WTC11 (cell line): ENCODE measurements at regions of chr2 and their contacts with region 1.

Region 1: GRCh38 chr2:135876066-135876711 is at the start of gene MCM6:
- DNase-seq: peak; percentile 98
- ATAC-seq: peak; percentile 91
- H3K4me3 Mint-ChIP-seq: peak within 1 kb of the TSS; percentile 90
- H3K27ac Mint-ChIP-seq: peak within 1 kb of the TSS; percentile 94
- H3K4me1 Mint-ChIP-seq: peaks cover 29% of the 10 kb centered on the region
- H3K27me3 Mint-ChIP-seq: peaks cover 4% of the 10 kb centered on the region; the same call in 1 of the 2 replicates
- CTCF ChIP-seq: no peak
- total RNA-seq, gene MCM6: 87.0 to 107 TPM (median 88.1 TPM) in 3 replicates

Region 2: GRCh38 chr2:135831180-135831812 is 44.9 kb before region 1 on chr2:
- CTCF ChIA-PET with region 1: no interaction called
- POLR2A ChIA-PET with region 1: no interaction called
- DNase-seq: no peak
- ATAC-seq: no peak
- H3K4me3 Mint-ChIP-seq: no peak overlapping the region
- H3K27ac Mint-ChIP-seq: no peak overlapping the region
- H3K4me1 Mint-ChIP-seq: no peaks in the 10 kb centered on the region
- H3K27me3 Mint-ChIP-seq: no peaks in the 10 kb centered on the region; the same call in 1 of the 2 replicates
- CTCF ChIP-seq: no peak

Region 3: DNA sequence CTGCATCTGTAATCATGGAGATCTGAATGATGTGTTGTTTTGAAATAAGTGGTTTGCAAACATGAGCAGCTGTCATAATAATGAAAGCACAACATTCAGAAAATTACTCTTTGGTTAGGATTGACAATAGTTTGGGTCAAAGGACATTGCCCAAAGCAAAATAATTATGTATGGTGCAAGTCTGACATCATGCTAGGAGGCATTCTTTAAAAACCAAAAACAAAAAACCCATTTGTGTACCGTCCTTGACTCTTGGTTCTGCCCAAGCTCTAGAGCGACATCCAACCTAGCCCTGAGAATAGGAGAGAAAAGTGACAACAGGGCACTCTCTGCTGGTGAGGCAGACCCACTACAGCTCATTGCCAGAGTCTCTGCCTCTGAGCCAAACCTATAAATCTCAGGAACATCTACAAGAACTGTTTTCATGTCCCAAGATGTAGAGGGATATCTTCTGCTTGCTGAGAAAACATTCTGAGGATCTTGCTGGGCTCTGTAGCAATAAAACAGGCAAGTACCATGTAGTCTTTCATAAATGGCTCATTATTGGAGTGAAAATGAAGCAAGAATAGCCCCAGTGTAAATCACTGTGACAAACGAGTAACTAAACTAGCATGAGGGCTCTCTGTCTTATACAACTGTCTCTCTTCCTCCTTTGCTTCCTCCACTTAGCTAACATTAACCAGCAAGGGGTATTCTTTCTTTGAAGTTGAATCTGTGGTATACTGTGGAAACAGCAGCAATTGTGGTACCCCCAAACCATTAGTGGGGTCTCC is 508.5 kb after region 1 on chr2:
- CTCF ChIA-PET with region 1: interaction called, 11 read pairs
- POLR2A ChIA-PET with region 1: interaction called, 4 read pairs
- DNase-seq: peak; percentile 39
- ATAC-seq: peak; percentile 98
- H3K4me3 Mint-ChIP-seq: no peak overlapping the region
- H3K27ac Mint-ChIP-seq: no peak overlapping the region
- H3K4me1 Mint-ChIP-seq: peaks cover 15% of the 10 kb centered on the region; the same call in 1 of the 2 replicates
- H3K27me3 Mint-ChIP-seq: no peaks in the 10 kb centered on the region
- CTCF ChIP-seq: peak; percentile 53